ENCODE measurements at regions of chr22 and their contacts with region 1.

Region 1: GRCh38 chr22:17171313-17172171 is 12.5 kb upstream of the HDHD5 start:
- DNase-seq: peak; percentile 24
- H3K4me3 ChIP-seq: peak overlapping the region; percentile 65
- H3K27me3 ChIP-seq: no peaks in the 10 kb centered on the region; the same call in 1 of the 2 replicates
- CTCF ChIP-seq: peak; percentile 97

Region 2: GRCh38 chr22:17077255-17077654 is 94.3 kb before region 1 on chr22:
- CTCF ChIA-PET with region 1: interaction called, 96 read pairs
- POLR2A ChIA-PET with region 1: interaction called, 3 read pairs
- DNase-seq: peak; percentile 58
- H3K4me3 ChIP-seq: no peak overlapping the region
- H3K27me3 ChIP-seq: no peaks in the 10 kb centered on the region
- CTCF ChIP-seq: no peak

Region 3: DNA sequence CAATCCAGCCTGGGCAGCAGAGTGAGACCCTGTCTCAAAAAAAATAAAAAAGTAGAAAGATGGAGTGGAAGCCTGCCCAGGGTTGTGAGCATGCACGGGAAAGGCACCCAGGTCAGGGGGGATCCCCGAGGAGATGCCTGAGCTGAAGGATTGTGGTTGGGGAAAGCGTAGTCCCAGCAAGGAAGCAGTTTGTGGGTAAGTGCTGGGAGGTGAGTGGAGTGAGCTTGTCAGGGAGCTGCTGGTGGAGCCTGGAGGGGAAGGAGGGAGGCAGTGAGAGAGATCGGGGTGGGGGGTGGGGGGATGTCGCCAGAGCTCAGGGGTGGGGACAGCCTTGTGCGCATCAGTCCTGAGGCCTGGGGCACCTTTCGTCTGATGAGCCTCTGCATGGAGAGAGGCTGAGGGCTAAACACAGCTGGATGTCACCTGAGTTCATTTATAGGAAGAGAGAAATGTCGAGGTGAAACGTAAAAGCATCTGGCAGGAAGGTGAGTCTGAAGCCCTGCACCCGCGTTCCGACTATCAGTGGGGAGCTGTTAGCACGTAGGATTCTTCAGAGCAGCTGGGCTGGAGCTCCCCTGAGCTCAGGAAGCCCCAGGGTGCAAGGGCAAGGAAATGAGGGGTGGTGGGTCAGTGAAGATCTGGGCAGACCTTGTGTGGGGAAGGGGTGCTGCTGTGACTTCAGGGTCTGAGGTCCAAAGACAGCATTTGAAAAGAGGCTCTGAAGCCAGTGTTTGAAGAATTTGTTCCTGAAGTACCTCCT is 60.6 kb before region 1 on chr22:
- CTCF ChIA-PET with region 1: interaction called, 10 read pairs
- POLR2A ChIA-PET with region 1: no interaction called
- DNase-seq: no peak
- H3K4me3 ChIP-seq: no peak overlapping the region
- H3K27me3 ChIP-seq: peaks cover 1% of the 10 kb centered on the region; the same call in 1 of the 2 replicates
- CTCF ChIP-seq: no peak

Region 4: GRCh38 chr22:17158568-17159503 is 12.7 kb before region 1 on chr22 and contains the start of gene HDHD5:
- CTCF ChIA-PET with region 1: interaction called, 104 read pairs
- POLR2A ChIA-PET with region 1: interaction called, 6 read pairs
- DNase-seq: peak; percentile 29
- H3K4me3 ChIP-seq: peak within 1 kb of the TSS; percentile 72
- H3K27me3 ChIP-seq: no peaks in the 10 kb centered on the region
- CTCF ChIP-seq: no peak
- polyA plus RNA-seq, gene HDHD5: 23.2 and 35.3 TPM in 2 replicates

Region 5: GRCh38 chr22:17213976-17214375 is 42.4 kb after region 1 on chr22:
- CTCF ChIA-PET with region 1: interaction called, 11 read pairs
- POLR2A ChIA-PET with region 1: no interaction called
- DNase-seq: no peak
- H3K4me3 ChIP-seq: no peak overlapping the region
- H3K27me3 ChIP-seq: no peaks in the 10 kb centered on the region
- CTCF ChIP-seq: peak; percentile 33

Region 6: GRCh38 chr22:17332109-17332508 is 160.6 kb after region 1 on chr22:
- CTCF ChIA-PET with region 1: no interaction called
- POLR2A ChIA-PET with region 1: no interaction called
- DNase-seq: no peak
- H3K4me3 ChIP-seq: no peak overlapping the region
- H3K27me3 ChIP-seq: no peaks in the 10 kb centered on the region
- CTCF ChIP-seq: no peak